ENCODE measurements at regions of chr20 and their contacts with region 1.

Region 1: GRCh38 chr20:47379433-47380150 is 23.1 kb upstream of the ZMYND8 start:
- DNase-seq: no peak
- H3K4me3 ChIP-seq: no peak overlapping the region
- H3K27ac ChIP-seq: no peak overlapping the region
- H3K4me1 ChIP-seq: peaks cover 10% of the 10 kb centered on the region
- CTCF ChIP-seq: no peak

Region 2: GRCh38 chr20:46752728-46753127 is 626.9 kb before region 1 on chr20:
- CTCF ChIA-PET with region 1: no interaction called
- POLR2A ChIA-PET with region 1: no interaction called
- intact Hi-C with region 1: loop called (anchors 5 kb)
- DNase-seq: peak; percentile 75
- H3K4me3 ChIP-seq: no peak overlapping the region
- H3K27ac ChIP-seq: no peak overlapping the region
- H3K4me1 ChIP-seq: peaks cover 14% of the 10 kb centered on the region
- CTCF ChIP-seq: peak; percentile 92

Region 3: DNA sequence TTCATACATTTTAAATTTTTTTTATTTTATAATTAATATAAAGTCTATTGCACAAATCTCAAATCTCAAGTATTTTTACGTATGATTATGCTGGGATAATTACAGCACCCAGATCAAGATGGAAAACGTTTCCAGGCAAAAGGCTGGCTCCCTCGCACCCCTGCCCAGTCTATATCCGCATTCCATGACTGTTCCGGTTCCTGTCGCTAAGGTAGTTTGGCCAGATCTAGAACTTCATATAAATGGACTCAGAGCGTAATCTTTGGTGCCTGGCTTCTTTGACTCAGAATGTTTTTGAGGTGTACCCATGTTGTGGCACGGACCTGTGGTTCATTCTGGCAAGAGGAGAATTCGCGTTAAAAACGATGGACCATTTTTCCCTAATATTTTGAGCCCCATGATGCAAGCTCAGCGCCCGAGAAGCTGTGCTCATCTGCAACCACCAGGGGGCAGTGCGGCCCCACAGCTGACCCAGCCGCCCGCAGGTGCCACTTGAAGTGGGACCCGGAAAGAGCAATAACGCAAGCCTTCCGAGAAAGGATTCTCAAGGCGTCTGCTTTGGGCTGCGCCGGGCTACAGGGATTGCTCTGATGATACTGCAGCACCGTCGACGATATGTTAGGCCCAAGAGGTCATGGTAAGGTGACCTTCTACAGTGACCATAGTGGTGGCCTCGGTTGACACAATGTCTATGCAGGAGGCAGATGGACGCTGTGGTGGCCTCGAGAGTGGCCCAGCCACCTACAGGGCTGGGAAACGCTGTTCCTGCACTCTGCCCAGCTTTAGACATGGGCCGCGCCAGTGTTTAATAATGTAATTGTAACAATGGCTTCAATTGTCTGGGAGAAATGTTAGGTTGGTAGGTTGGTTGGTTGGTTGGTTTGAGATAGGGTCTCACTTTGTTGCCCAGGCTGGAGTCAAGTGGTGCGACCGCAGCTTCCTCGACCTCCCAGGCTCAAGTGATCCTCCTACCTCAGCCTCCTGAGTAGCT is 183.2 kb before region 1 on chr20:
- CTCF ChIA-PET with region 1: no interaction called
- POLR2A ChIA-PET with region 1: no interaction called
- intact Hi-C with region 1: loop called (anchors 1 kb)
- DNase-seq: peak; percentile 87
- H3K4me3 ChIP-seq: peak overlapping the region; percentile 34
- H3K27ac ChIP-seq: no peak overlapping the region
- H3K4me1 ChIP-seq: peaks cover 4% of the 10 kb centered on the region
- CTCF ChIP-seq: peak; percentile 99

Region 4: DNA sequence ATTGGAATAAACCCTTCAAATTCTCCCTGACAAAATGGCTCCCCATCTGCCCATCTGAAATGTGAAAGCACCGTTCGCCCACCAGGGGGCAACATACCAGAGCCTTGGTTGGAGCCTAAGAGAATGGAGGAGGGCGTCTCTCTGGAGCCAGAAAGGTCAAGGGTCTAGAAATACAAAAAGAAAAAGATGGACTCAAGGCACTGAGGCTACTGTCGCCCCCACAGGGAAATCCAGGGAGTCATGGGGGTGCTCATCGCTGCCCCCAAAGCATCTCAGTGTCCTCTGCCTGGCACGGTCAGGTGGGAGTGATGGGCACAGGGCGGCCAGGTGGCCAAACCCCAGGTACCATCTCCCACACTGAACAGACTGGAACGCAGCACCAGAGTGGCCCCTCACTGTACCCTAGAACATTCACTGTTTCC is 159.4 kb before region 1 on chr20:
- CTCF ChIA-PET with region 1: no interaction called
- POLR2A ChIA-PET with region 1: no interaction called
- intact Hi-C with region 1: loop called (anchors 1 kb)
- DNase-seq: peak; percentile 52
- H3K4me3 ChIP-seq: no peak overlapping the region
- H3K27ac ChIP-seq: no peak overlapping the region
- H3K4me1 ChIP-seq: no peaks in the 10 kb centered on the region
- CTCF ChIP-seq: peak; percentile 88

Region 5: GRCh38 chr20:47272893-47273590 is 106.5 kb before region 1 on chr20:
- CTCF ChIA-PET with region 1: interaction called, 22 read pairs
- POLR2A ChIA-PET with region 1: interaction called, 5 read pairs
- intact Hi-C with region 1: loop called (anchors 1 kb)
- DNase-seq: peak; percentile 75
- H3K4me3 ChIP-seq: no peak overlapping the region
- H3K27ac ChIP-seq: peak overlapping the region; percentile 3
- H3K4me1 ChIP-seq: peaks cover 39% of the 10 kb centered on the region
- CTCF ChIP-seq: peak; percentile 98

Region 6: GRCh38 chr20:47296950-47297349 is 82.6 kb before region 1 on chr20:
- CTCF ChIA-PET with region 1: no interaction called
- POLR2A ChIA-PET with region 1: no interaction called
- intact Hi-C with region 1: loop called (anchors 2 kb)
- DNase-seq: no peak
- H3K4me3 ChIP-seq: no peak overlapping the region
- H3K27ac ChIP-seq: no peak overlapping the region
- H3K4me1 ChIP-seq: no peaks in the 10 kb centered on the region
- CTCF ChIP-seq: peak; percentile 49